B cell (primary cell): ENCODE measurements at regions of chr22 and their contacts with region 1.

Region 1: GRCh38 chr22:22787786-22788459 is 99.7 kb upstream of the IGLL5 start:
- DNase-seq: peak; percentile 76
- ATAC-seq: peak; percentile 84
- H3K4me3 ChIP-seq: no peak overlapping the region
- H3K4me3 Mint-ChIP-seq: no peak overlapping the region
- H3K27ac ChIP-seq: no peak overlapping the region
- H3K27ac Mint-ChIP-seq: no peak overlapping the region
- H3K4me1 ChIP-seq: peaks cover 0 to 3% of the 10 kb centered on the region in 2 donors
- H3K4me1 Mint-ChIP-seq: no peaks in the 10 kb centered on the region
- H3K27me3 ChIP-seq: peaks cover 0 to 3% (median 0%) of the 10 kb centered on the region in 4 experiments
- H3K27me3 Mint-ChIP-seq: peaks cover 12% of the 10 kb centered on the region
- CTCF ChIP-seq: peak; percentile 81

Region 2: GRCh38 chr22:22673628-22674027 is 114.3 kb before region 1 on chr22:
- CTCF ChIA-PET with region 1: no interaction called
- POLR2A ChIA-PET with region 1: no interaction called
- intact Hi-C with region 1: no loop called
- DNase-seq: no peak
- ATAC-seq: no peak
- H3K4me3 ChIP-seq: no peak overlapping the region
- H3K4me3 Mint-ChIP-seq: no peak overlapping the region
- H3K27ac ChIP-seq: no peak overlapping the region
- H3K27ac Mint-ChIP-seq: no peak overlapping the region
- H3K4me1 ChIP-seq: peaks cover under 1 to 2% of the 10 kb centered on the region in 2 donors
- H3K4me1 Mint-ChIP-seq: peaks cover 2% of the 10 kb centered on the region
- H3K27me3 ChIP-seq: no peaks in the 10 kb centered on the region
- H3K27me3 Mint-ChIP-seq: peaks cover 5% of the 10 kb centered on the region
- CTCF ChIP-seq: no peak

Region 3: GRCh38 chr22:22770280-22770871 is 17.5 kb before region 1 on chr22:
- CTCF ChIA-PET with region 1: interaction called, 31 read pairs
- POLR2A ChIA-PET with region 1: no interaction called
- intact Hi-C with region 1: no loop called
- DNase-seq: peak; percentile 60
- ATAC-seq: no peak
- H3K4me3 ChIP-seq: no peak overlapping the region
- H3K4me3 Mint-ChIP-seq: no peak overlapping the region
- H3K27ac ChIP-seq: no peak overlapping the region
- H3K27ac Mint-ChIP-seq: peak overlapping the region; percentile 47
- H3K4me1 ChIP-seq: peaks cover 22 to 39% of the 10 kb centered on the region in 2 donors
- H3K4me1 Mint-ChIP-seq: peaks cover 32% of the 10 kb centered on the region
- H3K27me3 ChIP-seq: peaks cover 0 to 10% (median 3%) of the 10 kb centered on the region in 4 experiments
- H3K27me3 Mint-ChIP-seq: peaks cover 28% of the 10 kb centered on the region
- CTCF ChIP-seq: peak; percentile 67